OCI-LY7 (cell line): ENCODE measurements at regions of chr7 and their contacts with region 1.

Region 1: GRCh38 chr7:64618785-64619456 is 47.0 kb upstream of the ZNF107 start:
- DNase-seq: peak; percentile 81
- H3K4me3 ChIP-seq: no peak overlapping the region
- H3K27ac ChIP-seq: no peak overlapping the region
- H3K4me1 ChIP-seq: no peaks in the 10 kb centered on the region
- CTCF ChIP-seq: peak; percentile 92

Region 2: DNA sequence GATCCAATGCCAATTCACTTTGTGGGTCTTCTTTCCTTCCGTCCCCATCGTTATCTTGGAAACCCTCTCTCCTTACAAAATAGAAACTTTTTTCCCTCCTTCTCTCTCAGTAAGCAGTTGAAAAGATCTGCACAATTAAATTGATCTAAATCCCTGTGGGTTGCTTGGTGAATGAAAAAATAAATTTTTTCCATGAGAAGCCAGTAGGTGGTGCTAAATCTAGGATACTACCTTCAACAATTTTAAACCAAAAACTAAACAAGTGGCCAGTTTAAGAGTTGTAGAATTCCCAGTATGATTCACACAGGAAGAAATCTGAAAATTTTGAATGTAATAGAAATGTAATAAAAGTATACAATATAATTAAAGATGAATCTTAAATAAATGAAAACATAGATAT is 1610.6 kb before region 1 on chr7:
- CTCF ChIA-PET with region 1: no interaction called
- POLR2A ChIA-PET with region 1: no interaction called
- intact Hi-C with region 1: loop called (anchors 2 kb)
- DNase-seq: no peak
- H3K4me3 ChIP-seq: no peak overlapping the region
- H3K27ac ChIP-seq: no peak overlapping the region
- H3K4me1 ChIP-seq: no peaks in the 10 kb centered on the region
- CTCF ChIP-seq: peak; percentile 70

Region 3: DNA sequence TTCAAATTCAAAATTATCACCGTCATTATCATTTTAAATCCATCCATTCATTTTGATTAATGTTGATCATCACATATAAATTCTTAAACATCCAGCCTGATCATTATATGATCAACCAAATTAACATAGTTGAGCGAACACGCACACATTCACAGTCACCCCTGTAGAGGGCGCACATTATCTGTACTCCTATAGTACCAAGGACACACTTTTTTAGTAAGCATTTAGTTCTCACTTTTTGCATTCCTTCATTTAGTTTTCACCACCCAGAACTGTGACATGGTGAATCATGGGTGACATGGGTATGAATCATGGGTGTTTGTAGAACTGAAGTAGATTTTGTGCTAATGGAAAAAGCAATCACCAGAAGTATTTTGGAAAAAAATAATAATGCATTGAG is 437.9 kb before region 1 on chr7:
- CTCF ChIA-PET with region 1: no interaction called
- POLR2A ChIA-PET with region 1: no interaction called
- intact Hi-C with region 1: loop called (anchors 1 kb)
- DNase-seq: peak; percentile 59
- H3K4me3 ChIP-seq: no peak overlapping the region
- H3K27ac ChIP-seq: no peak overlapping the region
- H3K4me1 ChIP-seq: no peaks in the 10 kb centered on the region
- CTCF ChIP-seq: peak; percentile 88

Region 4: DNA sequence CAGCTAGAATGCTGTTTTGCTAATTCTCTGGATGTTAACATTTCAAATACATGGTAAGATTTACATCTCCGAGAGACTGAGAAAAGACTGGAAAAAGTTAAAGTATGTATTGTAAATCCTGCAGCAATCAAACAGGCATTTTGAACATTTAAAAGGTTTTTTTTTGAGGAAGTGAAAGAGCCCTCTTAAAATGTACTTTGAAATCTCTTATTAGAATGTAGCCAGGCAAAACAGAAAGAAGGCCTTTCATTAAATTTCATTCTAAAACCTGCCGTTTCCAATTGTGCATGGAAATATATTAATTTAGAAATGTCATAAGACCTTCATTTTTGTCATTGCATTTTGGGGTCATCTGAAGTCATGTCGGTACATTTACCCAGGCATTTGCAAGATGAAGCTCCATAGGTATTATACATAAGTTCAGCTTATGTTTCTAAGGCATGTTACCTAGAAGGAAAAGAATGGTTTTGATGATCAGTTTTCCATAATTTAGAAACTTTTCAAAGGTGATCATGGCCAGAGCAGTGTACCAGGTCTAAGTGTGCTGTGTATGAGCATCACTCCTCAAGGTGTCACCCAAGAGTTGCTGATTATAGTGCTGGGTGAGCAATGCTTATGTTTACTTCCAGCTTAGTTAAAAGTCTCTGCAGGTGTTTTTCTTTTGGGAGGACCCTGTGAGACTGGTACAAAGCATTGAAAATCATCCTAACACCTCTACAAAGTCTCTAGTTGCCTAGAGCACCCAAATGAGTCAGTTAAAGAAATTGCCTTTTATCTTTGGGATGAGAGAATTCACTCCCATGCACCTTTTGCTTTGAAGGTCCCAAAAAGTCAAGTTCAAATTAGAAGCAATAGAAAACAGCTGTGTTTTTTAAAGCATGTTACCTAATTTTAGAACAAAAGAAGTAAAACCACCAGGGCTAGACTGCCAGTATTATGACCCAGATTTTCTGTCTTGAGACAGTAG is 298.1 kb before region 1 on chr7:
- CTCF ChIA-PET with region 1: no interaction called
- POLR2A ChIA-PET with region 1: no interaction called
- intact Hi-C with region 1: loop called (anchors 2 kb)
- DNase-seq: peak; percentile 85
- H3K4me3 ChIP-seq: peak overlapping the region; percentile 58
- H3K27ac ChIP-seq: peak overlapping the region; percentile 89
- H3K4me1 ChIP-seq: peaks cover 68% of the 10 kb centered on the region
- CTCF ChIP-seq: peak; percentile 79

Region 5: GRCh38 chr7:64359543-64359942 is 259.4 kb before region 1 on chr7:
- CTCF ChIA-PET with region 1: no interaction called
- POLR2A ChIA-PET with region 1: no interaction called
- intact Hi-C with region 1: no loop called
- DNase-seq: no peak
- H3K4me3 ChIP-seq: no peak overlapping the region
- H3K27ac ChIP-seq: no peak overlapping the region
- H3K4me1 ChIP-seq: no peaks in the 10 kb centered on the region
- CTCF ChIP-seq: no peak

Region 6: GRCh38 chr7:64485623-64486022 is 133.3 kb before region 1 on chr7:
- CTCF ChIA-PET with region 1: no interaction called
- POLR2A ChIA-PET with region 1: no interaction called
- intact Hi-C with region 1: loop called (anchors 10 kb)
- DNase-seq: no peak
- H3K4me3 ChIP-seq: no peak overlapping the region
- H3K27ac ChIP-seq: no peak overlapping the region
- H3K4me1 ChIP-seq: no peaks in the 10 kb centered on the region
- CTCF ChIP-seq: no peak